Naive thymus-derived CD4-positive, alpha-beta T cell (primary cell): ENCODE measurements at regions of chr6 and their contacts with region 1.

Region 1: DNA sequence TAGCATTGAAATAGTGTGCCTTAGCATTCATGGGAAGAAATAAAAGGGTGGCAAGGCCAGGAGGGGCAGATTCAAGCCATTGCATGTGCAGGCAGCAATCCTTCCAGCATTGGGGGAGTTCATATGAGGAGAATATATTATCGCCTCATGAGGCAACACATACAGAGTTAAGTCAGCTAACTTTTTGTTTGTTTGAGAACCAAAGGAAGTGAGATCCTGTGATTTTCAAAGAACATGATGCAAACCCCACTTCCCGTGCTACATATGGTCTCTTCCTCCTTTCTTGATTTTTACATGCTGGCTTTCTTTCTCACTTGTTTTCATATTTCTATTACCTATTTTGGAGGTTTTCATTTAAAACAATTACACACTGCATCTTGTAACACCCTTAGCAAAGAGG is 579.7 kb upstream of the ARID1B start:
- DNase-seq: peak in 7 of 9 donors; percentile 19 to 66 (median 44)
- ATAC-seq: peak; percentile 67
- H3K4me3 ChIP-seq: no peak overlapping the region
- H3K4me3 Mint-ChIP-seq: peak overlapping the region in 9 of 10 donors; percentile 7 to 75 (median 62)
- H3K27ac ChIP-seq: peak overlapping the region; percentile 20
- H3K27ac Mint-ChIP-seq: peak overlapping the region in 8 of 9 donors; percentile 65 to 95 (median 84)
- H3K4me1 ChIP-seq: peaks cover 0 to 7% of the 10 kb centered on the region in 2 donors
- H3K4me1 Mint-ChIP-seq: peaks cover 7 to 58% (median 45%) of the 10 kb centered on the region in 7 donors
- H3K27me3 ChIP-seq: no peaks in the 10 kb centered on the region
- H3K27me3 Mint-ChIP-seq: peaks cover 0 to 9% (median 0%) of the 10 kb centered on the region in 5 donors

Region 2: GRCh38 chr6:155795173-155795796 is 402.2 kb before region 1 on chr6:
- CTCF ChIA-PET with region 1: no interaction called
- POLR2A ChIA-PET with region 1: no interaction called
- intact Hi-C with region 1: no loop called
- DNase-seq: no peak
- ATAC-seq: no peak
- H3K4me3 ChIP-seq: no peak overlapping the region
- H3K4me3 Mint-ChIP-seq: no peak overlapping the region
- H3K27ac ChIP-seq: no peak overlapping the region
- H3K27ac Mint-ChIP-seq: no peak overlapping the region
- H3K4me1 ChIP-seq: no peaks in the 10 kb centered on the region
- H3K4me1 Mint-ChIP-seq: no peaks in the 10 kb centered on the region
- H3K27me3 ChIP-seq: no peaks in the 10 kb centered on the region
- H3K27me3 Mint-ChIP-seq: peaks cover 0 to 12% (median 4%) of the 10 kb centered on the region in 5 donors

Region 3: GRCh38 chr6:156269751-156270369 is 72.3 kb after region 1 on chr6:
- CTCF ChIA-PET with region 1: no interaction called
- POLR2A ChIA-PET with region 1: no interaction called
- intact Hi-C with region 1: loop called in 1 of 2 experiments (anchors 5 kb)
- DNase-seq: peak in 7 of 9 donors; percentile 29 to 67 (median 56)
- ATAC-seq: peak; percentile 69
- H3K4me3 ChIP-seq: peak overlapping the region; percentile 53
- H3K4me3 Mint-ChIP-seq: peak overlapping the region; percentile 2 to 87 (median 78)
- H3K27ac ChIP-seq: peak overlapping the region; percentile 55
- H3K27ac Mint-ChIP-seq: peak overlapping the region; percentile 0 to 92 (median 77)
- H3K4me1 ChIP-seq: peaks cover 0 to 20% of the 10 kb centered on the region in 2 donors
- H3K4me1 Mint-ChIP-seq: peaks cover 10 to 41% (median 32%) of the 10 kb centered on the region in 7 donors
- H3K27me3 ChIP-seq: no peaks in the 10 kb centered on the region
- H3K27me3 Mint-ChIP-seq: no peaks in the 10 kb centered on the region